ENCODE measurements at regions of chrX and their contacts with region 1.

Region 1: GRCh38 chrX:15143050-15143824 is 126.6 kb downstream of the ASB9 start:
- DNase-seq: peak; percentile 73
- H3K4me3 Mint-ChIP-seq: no peak overlapping the region
- H3K27ac Mint-ChIP-seq: no peak overlapping the region
- H3K4me1 Mint-ChIP-seq: peaks cover 15% of the 10 kb centered on the region
- H3K27me3 Mint-ChIP-seq: no peaks in the 10 kb centered on the region

Region 2: GRCh38 chrX:14039344-14039743 is 1103.9 kb before region 1 on chrX:
- CTCF ChIA-PET with region 1: no interaction called
- intact Hi-C with region 1: loop called (anchors 1 kb)
- DNase-seq: peak; percentile 72
- H3K4me3 Mint-ChIP-seq: no peak overlapping the region
- H3K27ac Mint-ChIP-seq: no peak overlapping the region
- H3K4me1 Mint-ChIP-seq: peaks cover 4% of the 10 kb centered on the region
- H3K27me3 Mint-ChIP-seq: no peaks in the 10 kb centered on the region

Region 3: GRCh38 chrX:14528629-14529289 is 614.5 kb before region 1 on chrX:
- CTCF ChIA-PET with region 1: no interaction called
- intact Hi-C with region 1: loop called (anchors 5 kb)
- DNase-seq: peak; percentile 77
- H3K4me3 Mint-ChIP-seq: no peak overlapping the region
- H3K27ac Mint-ChIP-seq: no peak overlapping the region
- H3K4me1 Mint-ChIP-seq: peaks cover 2% of the 10 kb centered on the region
- H3K27me3 Mint-ChIP-seq: peaks cover 2% of the 10 kb centered on the region

Region 4: DNA sequence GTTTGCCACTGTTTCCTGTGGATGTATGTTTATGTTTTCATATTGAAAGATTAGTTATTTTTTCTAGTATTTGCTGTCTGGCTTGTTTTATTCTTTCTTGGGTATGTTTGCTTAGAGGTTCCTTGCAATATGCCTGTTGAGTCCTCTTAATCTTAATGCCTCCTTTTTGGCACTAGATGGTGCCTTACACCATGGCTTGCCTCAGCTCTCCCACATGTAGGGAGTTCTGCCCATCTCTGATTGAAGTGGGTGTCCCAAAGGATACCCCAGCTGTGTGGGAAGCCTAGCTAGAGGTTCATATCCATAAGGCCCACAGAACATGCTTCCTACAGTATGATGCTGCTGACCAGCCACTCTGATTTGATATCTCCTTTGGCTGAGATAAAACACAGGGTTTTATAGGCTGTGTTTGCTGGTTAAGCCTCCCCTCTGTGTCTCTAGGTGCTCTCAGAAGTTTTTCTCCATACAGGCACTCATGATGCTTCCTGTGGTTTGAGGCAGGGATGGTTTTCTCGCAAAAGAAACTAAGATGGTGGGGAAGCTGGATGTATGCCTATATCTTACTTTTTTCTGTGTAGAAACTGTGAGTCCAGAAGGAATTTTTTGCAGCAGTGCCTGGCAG is 35.8 kb before region 1 on chrX:
- CTCF ChIA-PET with region 1: interaction called, 15 read pairs
- intact Hi-C with region 1: loop called (anchors 1 kb)
- DNase-seq: peak; percentile 6
- H3K4me3 Mint-ChIP-seq: no peak overlapping the region
- H3K27ac Mint-ChIP-seq: no peak overlapping the region
- H3K4me1 Mint-ChIP-seq: peaks cover 6% of the 10 kb centered on the region
- H3K27me3 Mint-ChIP-seq: no peaks in the 10 kb centered on the region

Region 5: DNA sequence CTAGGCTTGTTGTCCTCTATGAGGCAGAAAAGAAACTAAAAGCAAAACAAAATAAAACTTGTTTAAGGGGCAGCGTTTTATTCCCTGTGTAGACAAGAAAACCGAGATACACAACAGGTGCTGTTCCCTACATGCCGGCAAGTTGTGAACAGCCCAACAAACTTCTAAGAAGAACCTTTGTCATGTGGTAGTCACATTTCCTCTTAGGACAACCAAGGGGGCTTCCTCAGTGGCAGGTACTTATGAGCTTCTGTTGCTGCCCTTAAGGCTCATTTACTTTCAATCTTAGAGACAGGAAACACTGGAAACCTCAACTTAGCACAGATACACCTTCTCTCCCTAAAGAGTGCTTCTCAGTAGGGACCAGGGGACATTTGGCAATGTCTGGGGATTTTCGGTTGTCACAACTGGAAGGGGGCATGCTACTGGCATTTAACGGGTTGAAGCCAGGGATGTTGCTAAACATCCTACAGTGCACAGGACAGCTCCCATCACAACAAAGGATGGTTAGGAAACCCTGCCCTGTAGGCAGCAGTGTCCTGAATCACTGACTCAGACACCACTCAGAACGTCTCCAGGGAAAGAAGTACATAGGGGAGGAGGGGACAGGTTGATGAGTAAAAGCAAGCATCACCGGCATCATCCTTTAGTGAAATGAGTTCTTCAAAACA is 15.6 kb after region 1 on chrX:
- CTCF ChIA-PET with region 1: interaction called, 4 read pairs
- intact Hi-C with region 1: loop called (anchors 2 kb)
- DNase-seq: peak; percentile 51
- H3K4me3 Mint-ChIP-seq: peak overlapping the region; percentile 54
- H3K27ac Mint-ChIP-seq: peak overlapping the region; percentile 53
- H3K4me1 Mint-ChIP-seq: peaks cover 35% of the 10 kb centered on the region
- H3K27me3 Mint-ChIP-seq: no peaks in the 10 kb centered on the region

Region 6: DNA sequence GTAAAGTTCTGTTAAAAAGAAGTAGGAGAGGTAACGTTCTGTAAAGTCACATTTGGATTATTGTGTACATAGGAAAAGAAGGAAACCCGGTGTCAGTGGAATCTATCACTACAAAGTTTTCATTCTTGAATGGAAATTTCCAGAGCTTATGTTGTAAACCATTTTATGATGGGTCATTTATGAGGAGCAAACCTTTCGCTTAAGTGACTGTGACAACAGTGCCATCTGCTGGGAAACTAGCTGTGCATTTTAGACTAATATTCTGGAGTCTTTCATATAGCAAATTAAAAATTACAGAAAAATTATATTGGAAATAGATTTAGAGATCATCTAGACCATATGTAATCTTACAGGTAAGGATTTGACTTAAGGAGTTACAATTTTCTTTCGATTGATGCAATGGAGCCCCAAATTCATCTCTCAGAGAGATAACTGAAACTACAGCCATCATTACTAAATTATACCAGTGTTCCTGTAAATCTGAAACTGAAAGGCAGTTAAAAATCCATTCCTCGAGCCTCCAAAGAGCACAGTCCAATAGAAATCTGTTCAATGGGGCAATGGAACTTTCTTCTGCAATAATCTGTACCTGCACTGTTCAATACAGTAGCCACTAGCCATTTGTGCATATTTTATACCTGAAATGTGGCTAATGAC is 99.8 kb after region 1 on chrX:
- CTCF ChIA-PET with region 1: interaction called, 10 read pairs
- intact Hi-C with region 1: loop called (anchors 1 kb)
- DNase-seq: peak; percentile 61
- H3K4me3 Mint-ChIP-seq: no peak overlapping the region
- H3K27ac Mint-ChIP-seq: no peak overlapping the region
- H3K4me1 Mint-ChIP-seq: no peaks in the 10 kb centered on the region
- H3K27me3 Mint-ChIP-seq: no peaks in the 10 kb centered on the region